BJ (cell line): ENCODE measurements at regions of chr10 and their contacts with region 1.

Region 1: DNA sequence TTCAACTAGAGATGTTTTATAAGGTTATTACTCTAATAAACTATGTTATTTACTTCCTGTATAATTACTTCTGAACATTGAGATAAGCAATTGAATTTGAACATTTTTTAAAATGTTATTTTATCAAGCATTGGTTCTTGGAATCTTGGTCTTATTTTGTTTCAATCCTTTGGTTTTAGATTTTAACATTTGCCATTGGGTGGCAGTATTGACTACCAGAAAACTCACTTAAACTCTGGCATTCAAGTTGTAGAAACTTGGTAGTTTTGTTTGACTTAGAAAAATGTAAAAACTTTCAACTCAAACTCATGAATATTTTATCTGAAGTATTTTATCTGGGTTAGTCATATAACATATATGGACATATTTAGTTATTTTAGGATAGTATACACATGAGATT is 48.1 kb downstream of the ATRNL1 start:
- DNase-seq: no peak
- H3K4me3 ChIP-seq: no peak overlapping the region
- H3K27me3 ChIP-seq: no peaks in the 10 kb centered on the region
- CTCF ChIP-seq: peak; percentile 42

Region 2: GRCh38 chr10:115107830-115108229 is 33.4 kb before region 1 on chr10:
- CTCF ChIA-PET with region 1: no interaction called
- POLR2A ChIA-PET with region 1: no interaction called
- DNase-seq: no peak
- H3K4me3 ChIP-seq: no peak overlapping the region
- H3K27me3 ChIP-seq: no peaks in the 10 kb centered on the region
- CTCF ChIP-seq: no peak

Region 3: GRCh38 chr10:115417585-115418265 is 276.5 kb after region 1 on chr10:
- CTCF ChIA-PET with region 1: interaction called, 12 read pairs
- POLR2A ChIA-PET with region 1: no interaction called
- DNase-seq: peak; percentile 1
- H3K4me3 ChIP-seq: no peak overlapping the region
- H3K27me3 ChIP-seq: no peaks in the 10 kb centered on the region
- CTCF ChIP-seq: peak; percentile 74